CD4-positive, alpha-beta memory T cell (primary cell): ENCODE measurements at regions of chr19 and their contacts with region 1.

Region 1: DNA sequence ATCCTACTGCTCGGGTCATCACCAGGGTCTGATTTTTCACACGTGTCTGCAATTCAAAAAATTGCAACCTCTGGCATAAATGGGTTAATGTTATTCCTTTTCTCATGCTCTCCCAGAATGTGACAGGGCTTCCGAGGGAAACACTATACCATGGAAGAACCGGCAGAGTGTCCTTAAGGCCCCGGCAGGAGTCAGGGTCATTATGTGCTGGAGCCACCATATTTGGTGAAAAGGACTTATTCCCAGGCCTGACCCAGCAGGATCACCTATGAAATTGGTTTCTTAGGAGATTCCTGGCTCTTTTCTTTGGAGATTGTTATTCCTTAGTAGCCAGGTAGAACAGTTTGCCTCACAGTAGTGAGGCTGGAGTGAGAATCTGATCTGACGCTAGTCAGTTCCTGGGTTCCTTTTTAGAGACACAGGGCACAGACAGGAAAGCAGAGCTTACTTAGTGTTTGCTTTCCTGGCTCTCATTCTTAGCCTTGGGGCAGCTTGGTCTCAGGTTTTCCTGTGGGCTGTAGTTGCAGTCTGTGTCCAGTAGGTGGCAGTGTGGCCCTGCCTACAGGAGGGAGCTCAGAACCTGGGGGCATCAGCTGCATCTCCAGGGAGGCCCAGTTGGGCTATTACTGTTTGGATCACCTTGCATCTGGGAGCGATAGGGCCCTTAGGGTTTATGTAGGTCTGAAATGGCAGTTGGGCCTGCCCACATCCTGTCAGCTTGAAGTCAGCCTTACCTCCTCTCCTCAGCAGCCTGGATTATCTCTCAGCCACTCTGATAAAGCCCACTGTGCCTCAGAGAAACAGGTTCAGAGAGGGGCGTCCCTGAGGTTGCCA is 12.4 kb downstream of the SNRNP70 start:
- DNase-seq: peak; percentile 71 to 77 (median 76)
- H3K4me3 ChIP-seq: no peak overlapping the region
- H3K4me3 Mint-ChIP-seq: no peak overlapping the region
- H3K27ac ChIP-seq: no peak overlapping the region
- H3K27ac Mint-ChIP-seq: peak overlapping the region in 2 of 7 donors; percentile 4 to 35
- H3K4me1 ChIP-seq: no peaks in the 10 kb centered on the region
- H3K4me1 Mint-ChIP-seq: peaks cover 0 to 12% (median 9%) of the 10 kb centered on the region in 4 donors
- H3K27me3 ChIP-seq: no peaks in the 10 kb centered on the region
- H3K27me3 Mint-ChIP-seq: no peaks in the 10 kb centered on the region

Region 2: DNA sequence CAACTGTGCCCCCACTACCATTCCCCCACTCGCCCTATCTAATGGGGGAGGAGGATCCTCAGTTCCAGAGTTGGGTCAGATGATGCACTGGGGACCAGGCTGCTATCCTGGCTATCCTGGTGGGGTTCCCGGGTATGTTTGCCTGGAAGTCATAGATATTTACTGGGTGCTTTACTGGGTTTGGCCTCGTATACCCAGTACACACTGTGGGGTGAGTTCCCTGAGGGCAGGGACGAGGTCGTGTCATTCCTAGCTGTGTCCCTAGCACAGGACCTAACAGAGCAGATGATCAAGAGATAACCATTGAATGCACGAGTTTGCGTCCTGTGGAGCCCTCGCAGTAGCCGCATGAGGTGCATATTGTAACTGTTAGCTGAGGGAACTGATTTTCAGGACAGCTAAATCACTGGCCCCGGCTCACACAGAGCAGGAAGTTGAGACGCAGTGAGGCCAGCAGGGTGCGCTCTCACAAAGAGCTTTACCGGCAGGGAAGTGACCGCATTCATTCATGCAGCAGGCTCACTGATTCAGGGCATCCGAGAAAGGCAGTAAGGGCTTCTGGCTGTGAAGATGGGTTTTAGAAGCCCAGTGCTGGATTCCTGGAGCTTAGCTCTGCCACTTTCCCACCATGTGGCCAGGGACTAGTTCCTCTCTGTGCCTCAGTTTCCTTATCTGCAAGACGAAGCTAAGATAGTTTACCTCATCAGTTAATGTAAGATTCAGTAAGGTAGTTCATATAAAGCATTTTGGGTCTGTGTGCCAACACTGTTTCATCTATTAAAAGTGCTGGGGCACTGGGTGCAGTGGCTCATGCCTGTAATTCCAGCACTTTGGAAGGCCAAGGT is 98.0 kb before region 1 on chr19:
- CTCF ChIA-PET with region 1: interaction called, 11 read pairs
- POLR2A ChIA-PET with region 1: interaction called, 3 read pairs
- intact Hi-C with region 1: no loop called
- DNase-seq: peak; percentile 64 to 76 (median 69)
- H3K4me3 ChIP-seq: no peak overlapping the region
- H3K4me3 Mint-ChIP-seq: peak overlapping the region in 1 of 8 donors; percentile 8
- H3K27ac ChIP-seq: no peak overlapping the region
- H3K27ac Mint-ChIP-seq: peak overlapping the region in 1 of 7 donors; percentile 46
- H3K4me1 ChIP-seq: peaks cover 3% of the 10 kb centered on the region
- H3K4me1 Mint-ChIP-seq: peaks cover 7 to 24% (median 15%) of the 10 kb centered on the region in 4 donors
- H3K27me3 ChIP-seq: no peaks in the 10 kb centered on the region
- H3K27me3 Mint-ChIP-seq: no peaks in the 10 kb centered on the region

Region 3: GRCh38 chr19:49042177-49042576 is 55.5 kb before region 1 on chr19:
- CTCF ChIA-PET with region 1: no interaction called
- POLR2A ChIA-PET with region 1: no interaction called
- intact Hi-C with region 1: no loop called
- DNase-seq: no peak
- H3K4me3 ChIP-seq: no peak overlapping the region
- H3K4me3 Mint-ChIP-seq: no peak overlapping the region
- H3K27ac ChIP-seq: no peak overlapping the region
- H3K27ac Mint-ChIP-seq: peak overlapping the region in 1 of 7 donors; percentile 52
- H3K4me1 ChIP-seq: no peaks in the 10 kb centered on the region
- H3K4me1 Mint-ChIP-seq: no peaks in the 10 kb centered on the region
- H3K27me3 ChIP-seq: no peaks in the 10 kb centered on the region
- H3K27me3 Mint-ChIP-seq: no peaks in the 10 kb centered on the region

Region 4: DNA sequence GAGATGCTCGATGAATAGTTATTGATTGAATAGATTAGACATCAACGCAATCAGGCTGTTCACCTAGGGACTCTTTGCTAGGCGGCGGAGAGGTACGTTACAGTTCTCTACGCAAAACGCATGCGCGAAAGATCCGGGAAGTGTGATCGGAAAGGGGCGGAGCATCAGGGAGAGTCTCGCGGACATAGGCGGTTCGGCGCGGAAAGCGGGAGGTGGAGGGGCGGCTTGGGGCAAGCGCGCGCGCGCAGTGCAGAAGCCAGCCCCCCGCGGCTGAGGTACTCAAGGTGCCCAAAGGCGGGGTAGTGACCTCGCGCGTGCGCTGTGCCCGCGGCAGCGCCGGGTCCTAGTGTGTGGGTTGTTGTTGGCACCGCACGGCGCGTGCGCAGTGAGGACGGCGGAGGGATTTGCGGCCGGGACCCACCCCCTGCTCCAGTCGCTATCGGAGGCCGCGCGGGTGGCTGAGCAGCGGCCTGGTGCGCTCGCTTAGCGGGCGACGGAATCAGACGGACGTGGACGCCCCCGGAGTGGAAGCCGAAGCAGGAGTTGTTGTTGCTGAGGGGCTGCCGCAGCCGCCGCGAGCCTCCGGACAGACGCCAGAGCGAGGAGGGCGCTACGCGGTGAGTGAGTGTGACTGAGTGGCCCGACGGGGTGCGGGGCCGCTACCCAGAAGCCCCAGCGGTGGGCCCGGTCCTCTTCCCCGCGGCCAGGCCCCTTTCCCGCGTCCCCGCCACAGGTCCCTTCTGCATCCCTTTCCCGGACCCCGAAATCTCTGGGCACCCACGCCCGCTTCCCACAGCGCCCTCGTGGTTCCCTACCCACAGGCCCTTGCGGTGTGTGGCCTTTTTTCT is 12.4 kb before region 1 on chr19 and contains the start of gene SNRNP70:
- CTCF ChIA-PET with region 1: interaction called, 28 read pairs
- POLR2A ChIA-PET with region 1: interaction called, 4 read pairs
- intact Hi-C with region 1: no loop called
- DNase-seq: peak; percentile 99 to 100 (median 100)
- H3K4me3 ChIP-seq: peak within 1 kb of the TSS; percentile 72 to 95
- H3K4me3 Mint-ChIP-seq: peak within 1 kb of the TSS; percentile 82 to 96 (median 94)
- H3K27ac ChIP-seq: peak within 1 kb of the TSS; percentile 81
- H3K27ac Mint-ChIP-seq: peak within 1 kb of the TSS; percentile 88 to 98 (median 93)
- H3K4me1 ChIP-seq: peaks cover 32% of the 10 kb centered on the region
- H3K4me1 Mint-ChIP-seq: peaks cover 22 to 46% (median 32%) of the 10 kb centered on the region in 4 donors
- H3K27me3 ChIP-seq: no peaks in the 10 kb centered on the region
- H3K27me3 Mint-ChIP-seq: peaks cover 0 to 3% of the 10 kb centered on the region in 2 donors
- total RNA-seq, gene SNRNP70: 675 to 689 TPM

Region 5: DNA sequence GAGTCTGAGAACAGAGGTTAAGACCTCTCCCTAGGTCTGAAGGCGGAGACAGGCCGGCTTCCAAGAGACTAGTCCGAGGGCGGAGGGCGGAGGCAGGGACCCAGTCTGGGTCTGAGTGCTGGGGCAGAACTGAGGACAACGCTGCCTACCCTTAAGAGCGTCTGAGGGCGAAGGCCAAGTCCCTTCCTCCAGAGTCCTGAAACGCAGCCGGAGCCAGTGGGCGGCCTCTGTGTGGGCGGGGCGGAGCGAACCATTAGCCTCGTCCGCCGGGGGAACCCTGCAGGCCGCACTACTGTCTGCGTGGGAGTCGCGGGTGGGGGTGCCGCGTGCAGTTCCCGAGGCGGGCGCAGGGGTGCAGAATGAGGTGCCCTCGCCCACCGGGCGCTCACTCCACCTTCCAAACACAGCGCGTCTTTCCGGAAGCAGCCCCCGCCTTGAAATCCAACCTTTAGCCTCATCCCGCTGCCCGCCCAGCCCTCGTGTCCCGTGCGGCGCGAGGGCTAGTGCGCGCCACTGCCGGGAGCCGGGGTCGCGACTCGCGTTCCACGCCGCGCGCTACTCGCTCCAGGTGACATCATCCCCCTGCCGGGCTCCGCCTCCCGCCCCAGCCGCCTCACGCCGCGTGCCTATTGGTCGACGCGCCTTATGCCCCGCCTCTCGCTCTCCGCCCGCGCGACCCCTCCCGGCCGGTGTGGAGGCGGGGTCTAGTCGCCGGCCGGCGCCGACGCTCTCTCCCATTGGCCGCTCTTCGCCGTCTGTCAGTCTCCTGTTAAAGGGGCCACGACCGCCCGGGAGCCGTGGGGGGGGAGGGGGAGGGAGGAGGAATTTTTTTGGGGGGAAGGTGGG is 21.1 kb after region 1 on chr19 and contains the start of gene C19orf73:
- CTCF ChIA-PET with region 1: interaction called, 20 read pairs
- POLR2A ChIA-PET with region 1: interaction called, 9 read pairs
- intact Hi-C with region 1: no loop called
- DNase-seq: peak; percentile 94 to 98 (median 97)
- H3K4me3 ChIP-seq: peak within 1 kb of the TSS; percentile 73 to 78
- H3K4me3 Mint-ChIP-seq: peak within 1 kb of the TSS; percentile 83 to 93 (median 88)
- H3K27ac ChIP-seq: peak within 1 kb of the TSS; percentile 79
- H3K27ac Mint-ChIP-seq: peak within 1 kb of the TSS; percentile 90 to 96 (median 94)
- H3K4me1 ChIP-seq: peaks cover 31% of the 10 kb centered on the region
- H3K4me1 Mint-ChIP-seq: peaks cover 22 to 42% (median 36%) of the 10 kb centered on the region in 4 donors
- H3K27me3 ChIP-seq: no peaks in the 10 kb centered on the region
- H3K27me3 Mint-ChIP-seq: no peaks in the 10 kb centered on the region
- total RNA-seq, gene C19orf73: 1.7 to 1.9 TPM

Region 6: DNA sequence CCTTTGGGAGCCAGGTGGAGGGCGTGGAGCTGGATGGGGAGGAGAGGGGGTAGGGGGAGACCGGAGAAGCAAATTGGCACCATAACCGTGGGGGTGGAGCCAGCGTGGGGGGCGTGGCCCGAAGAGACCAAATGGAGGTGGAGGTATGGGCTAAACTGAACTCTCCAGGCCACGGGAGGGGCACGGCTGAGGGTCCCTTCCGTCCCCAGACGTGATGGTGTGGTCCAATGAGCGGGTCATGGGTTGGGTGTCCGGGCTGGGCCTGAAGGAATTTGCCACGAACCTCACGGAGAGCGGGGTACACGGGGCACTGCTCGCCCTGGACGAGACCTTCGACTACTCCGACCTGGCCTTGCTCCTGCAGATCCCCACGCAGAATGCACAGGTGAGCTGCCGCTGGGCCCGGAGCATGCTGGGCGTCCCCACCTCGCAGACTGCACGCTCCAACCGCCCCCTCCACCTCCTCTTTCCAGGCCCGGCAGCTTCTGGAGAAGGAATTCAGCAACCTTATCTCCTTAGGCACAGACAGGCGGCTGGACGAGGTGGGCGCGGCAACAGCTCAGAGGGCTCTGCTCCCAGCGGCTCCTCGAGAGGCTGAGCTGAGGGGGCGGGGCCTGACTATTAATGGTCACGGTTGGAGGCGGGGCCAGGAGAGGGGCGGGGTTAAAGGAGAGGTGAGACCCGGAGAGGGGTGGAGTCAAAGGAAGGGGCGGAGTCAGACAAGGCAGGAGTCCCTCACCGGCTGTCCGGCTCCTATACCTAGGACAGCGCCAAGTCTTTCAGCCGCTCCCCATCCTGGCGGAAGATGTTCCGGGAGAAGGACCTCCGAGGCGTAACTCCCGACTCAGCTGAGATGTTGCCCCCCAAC is 51.3 kb after region 1 on chr19:
- CTCF ChIA-PET with region 1: interaction called, 83 read pairs
- POLR2A ChIA-PET with region 1: interaction called, 7 read pairs
- intact Hi-C with region 1: loop called (anchors 1 kb)
- DNase-seq: peak; percentile 64 to 85 (median 69)
- H3K4me3 ChIP-seq: peak overlapping the region in 1 of 2 donors; percentile 42
- H3K4me3 Mint-ChIP-seq: peak overlapping the region; percentile 63 to 91 (median 74)
- H3K27ac ChIP-seq: no peak overlapping the region
- H3K27ac Mint-ChIP-seq: peak overlapping the region in 1 of 7 donors; percentile 71
- H3K4me1 ChIP-seq: peaks cover 46% of the 10 kb centered on the region
- H3K4me1 Mint-ChIP-seq: peaks cover 14 to 58% (median 26%) of the 10 kb centered on the region in 4 donors
- H3K27me3 ChIP-seq: peaks cover 39% of the 10 kb centered on the region
- H3K27me3 Mint-ChIP-seq: peaks cover 36 to 53% of the 10 kb centered on the region in 2 donors

Region 7: GRCh38 chr19:49200238-49200862 is 102.7 kb after region 1 on chr19:
- CTCF ChIA-PET with region 1: interaction called, 39 read pairs
- POLR2A ChIA-PET with region 1: interaction called, 6 read pairs
- intact Hi-C with region 1: loop called (anchors 2 kb)
- DNase-seq: no peak
- H3K4me3 ChIP-seq: no peak overlapping the region
- H3K4me3 Mint-ChIP-seq: no peak overlapping the region
- H3K27ac ChIP-seq: no peak overlapping the region
- H3K27ac Mint-ChIP-seq: peak overlapping the region in 1 of 7 donors; percentile 15
- H3K4me1 ChIP-seq: no peaks in the 10 kb centered on the region
- H3K4me1 Mint-ChIP-seq: peaks cover 0 to 5% (median 4%) of the 10 kb centered on the region in 4 donors
- H3K27me3 ChIP-seq: no peaks in the 10 kb centered on the region
- H3K27me3 Mint-ChIP-seq: peaks cover 4% of the 10 kb centered on the region in 2 donors

Region 8: DNA sequence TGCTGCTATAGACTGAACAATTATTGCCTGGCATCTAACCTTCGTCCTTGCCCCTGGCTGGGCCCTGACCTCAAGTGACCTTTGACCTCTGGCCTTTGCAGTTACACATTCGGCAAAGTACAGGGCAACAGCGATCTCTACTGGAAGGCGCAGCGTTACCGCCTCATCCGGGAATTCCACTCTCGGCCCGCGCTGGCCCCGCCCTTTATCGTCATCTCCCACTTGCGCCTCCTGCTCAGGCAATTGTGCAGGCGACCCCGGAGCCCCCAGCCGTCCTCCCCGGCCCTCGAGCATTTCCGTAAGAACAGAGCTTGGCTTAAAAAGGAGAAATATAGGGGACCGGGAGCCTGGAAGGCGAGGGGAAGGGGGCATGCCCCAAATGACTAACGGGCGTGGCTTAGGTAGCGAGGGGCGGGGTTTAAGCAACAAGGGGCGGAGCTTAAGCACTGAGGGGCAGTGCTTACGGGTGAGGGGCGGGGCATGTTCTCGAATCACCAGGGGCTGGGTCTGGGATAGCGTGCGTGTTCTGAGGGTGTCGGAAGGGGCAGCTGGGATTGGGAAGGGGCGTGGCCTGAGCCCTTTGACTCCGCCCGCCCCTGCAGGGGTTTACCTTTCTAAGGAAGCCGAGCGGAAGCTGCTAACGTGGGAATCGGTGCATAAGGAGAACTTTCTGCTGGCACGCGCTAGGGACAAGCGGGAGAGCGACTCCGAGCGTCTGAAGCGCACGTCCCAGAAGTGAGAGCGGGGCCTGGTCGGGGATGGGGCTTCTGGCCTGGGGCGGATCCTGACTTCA is 112.6 kb after region 1 on chr19:
- CTCF ChIA-PET with region 1: interaction called, 4 read pairs
- POLR2A ChIA-PET with region 1: interaction called, 3 read pairs
- intact Hi-C with region 1: loop called (anchors 2 kb)
- DNase-seq: peak in 4 of 5 donors; percentile 18 to 35 (median 24)
- H3K4me3 ChIP-seq: no peak overlapping the region
- H3K4me3 Mint-ChIP-seq: peak overlapping the region in 3 of 8 donors; percentile 13 to 36 (median 18)
- H3K27ac ChIP-seq: no peak overlapping the region
- H3K27ac Mint-ChIP-seq: peak overlapping the region in 1 of 7 donors; percentile 80
- H3K4me1 ChIP-seq: peaks cover 4% of the 10 kb centered on the region
- H3K4me1 Mint-ChIP-seq: peaks cover 5 to 18% (median 12%) of the 10 kb centered on the region in 4 donors
- H3K27me3 ChIP-seq: no peaks in the 10 kb centered on the region
- H3K27me3 Mint-ChIP-seq: peaks cover 0 to 3% of the 10 kb centered on the region in 2 donors